ENCODE measurements at regions of chr14 and their contacts with region 1.

Region 1: DNA sequence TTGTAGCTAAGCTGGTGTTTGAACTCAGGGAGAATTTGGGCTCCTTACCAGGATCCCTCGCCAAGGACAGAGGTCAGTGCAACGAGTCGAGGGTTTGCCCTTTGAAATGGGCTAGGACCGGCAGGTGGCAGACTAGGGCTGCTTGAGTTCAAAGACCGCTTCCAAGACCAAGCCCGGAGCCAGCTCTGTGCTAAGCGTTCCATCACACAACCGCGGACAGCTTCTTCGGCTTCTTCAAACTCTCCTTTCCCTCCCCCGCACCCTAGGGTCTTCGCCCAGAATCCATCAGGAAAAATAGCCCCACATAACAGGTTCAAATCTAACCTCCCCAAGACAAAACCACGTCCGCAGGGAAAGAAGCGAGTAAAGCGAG is 705 bp upstream of the FLVCR2 start:
- DNase-seq: peak; percentile 79
- H3K4me3 Mint-ChIP-seq: peak overlapping the region; percentile 81
- H3K27ac Mint-ChIP-seq: peak overlapping the region; percentile 13
- H3K4me1 Mint-ChIP-seq: peaks cover 22% of the 10 kb centered on the region
- H3K27me3 Mint-ChIP-seq: no peaks in the 10 kb centered on the region

Region 2: DNA sequence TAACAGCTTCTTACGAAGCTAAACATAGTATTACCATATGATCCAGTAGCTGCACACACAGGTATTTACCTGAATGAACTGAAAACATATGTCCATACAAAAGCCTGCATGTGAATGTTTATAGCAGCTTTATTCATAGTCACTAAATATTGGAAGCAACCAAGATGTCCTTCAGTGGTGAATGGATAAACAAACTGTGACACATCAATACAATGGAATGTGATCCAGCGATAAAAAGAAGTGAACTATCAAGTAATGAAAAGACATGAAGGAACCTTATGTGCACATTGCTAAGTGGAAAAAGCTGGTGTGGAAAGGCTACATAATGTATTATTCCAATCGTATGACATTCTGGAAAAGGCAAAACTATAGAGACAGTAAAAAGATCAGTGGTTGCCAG is 188.0 kb before region 1 on chr14:
- CTCF ChIA-PET with region 1: no interaction called
- POLR2A ChIA-PET with region 1: no interaction called
- DNase-seq: no peak
- H3K4me3 Mint-ChIP-seq: no peak overlapping the region
- H3K27ac Mint-ChIP-seq: no peak overlapping the region
- H3K4me1 Mint-ChIP-seq: no peaks in the 10 kb centered on the region
- H3K27me3 Mint-ChIP-seq: peaks cover 37% of the 10 kb centered on the region

Region 3: DNA sequence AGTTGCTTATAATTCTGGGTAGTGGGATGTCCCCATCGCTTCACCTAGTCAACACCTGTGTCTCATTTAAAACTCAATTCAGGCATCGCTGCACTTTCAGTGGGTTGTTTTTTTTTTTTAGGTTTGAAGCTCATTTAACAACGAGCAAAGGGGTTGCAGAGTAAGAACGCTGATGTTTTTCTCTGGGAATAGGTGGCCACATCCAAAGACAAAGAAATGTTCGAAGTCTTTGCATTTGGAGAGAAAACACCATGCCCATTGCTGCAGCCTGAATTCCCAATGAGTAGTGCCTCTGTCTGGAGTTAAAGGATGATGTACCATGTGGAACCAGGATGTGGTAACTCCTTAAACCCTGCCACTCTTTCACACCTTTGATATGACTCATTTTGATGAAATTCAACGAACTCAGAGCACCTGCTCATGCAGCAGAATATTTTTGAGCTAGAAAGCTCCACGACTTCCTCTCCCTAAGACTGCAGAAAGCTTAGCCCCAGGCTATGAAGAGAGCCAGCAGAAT is 90.5 kb before region 1 on chr14:
- CTCF ChIA-PET with region 1: interaction called, 18 read pairs
- POLR2A ChIA-PET with region 1: no interaction called
- DNase-seq: peak; percentile 40
- H3K4me3 Mint-ChIP-seq: no peak overlapping the region
- H3K27ac Mint-ChIP-seq: peak overlapping the region; percentile 61
- H3K4me1 Mint-ChIP-seq: peaks cover 39% of the 10 kb centered on the region
- H3K27me3 Mint-ChIP-seq: no peaks in the 10 kb centered on the region

Region 4: DNA sequence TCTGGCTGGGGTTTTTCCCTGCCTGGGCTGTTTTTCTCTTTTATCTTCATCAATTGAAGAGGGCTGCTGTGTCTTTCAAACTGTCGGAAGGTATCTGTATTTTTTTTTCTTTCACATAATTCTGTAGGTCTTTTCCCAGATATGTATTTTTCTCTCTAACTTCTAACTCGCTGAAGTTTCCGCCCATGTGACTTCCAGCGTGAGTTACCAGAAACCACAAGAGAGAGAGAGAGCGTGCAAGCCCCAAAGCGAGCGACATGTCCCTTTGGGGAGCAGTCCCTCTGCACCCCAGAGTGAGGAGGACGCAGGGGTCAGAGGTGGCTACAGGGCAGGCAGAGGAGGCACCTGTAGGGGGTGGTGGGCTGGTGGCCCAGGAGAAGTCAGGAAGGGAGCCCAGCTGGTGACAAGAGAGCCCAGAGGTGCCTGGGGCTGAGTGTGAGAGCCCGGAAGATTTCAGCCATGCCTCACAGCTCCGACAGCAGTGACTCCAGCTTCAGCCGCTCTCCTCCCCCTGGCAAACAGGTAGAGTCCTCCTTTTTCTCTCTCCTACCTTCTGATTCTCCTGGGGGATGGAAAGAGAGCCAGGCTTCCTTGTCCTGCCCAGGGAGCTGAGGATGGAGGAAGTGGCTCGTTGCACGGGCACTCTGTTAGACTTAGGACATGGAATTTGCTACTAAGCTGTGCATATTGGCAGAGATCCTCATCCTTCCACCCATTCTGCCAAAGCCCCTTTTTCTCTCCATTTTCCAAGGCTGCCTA is 55.3 kb before region 1 on chr14 and contains the start of gene BATF:
- CTCF ChIA-PET with region 1: interaction called, 14 read pairs
- POLR2A ChIA-PET with region 1: interaction called, 6 read pairs
- DNase-seq: peak; percentile 85
- H3K4me3 Mint-ChIP-seq: peak within 1 kb of the TSS; percentile 99
- H3K27ac Mint-ChIP-seq: peak within 1 kb of the TSS; percentile 94
- H3K4me1 Mint-ChIP-seq: peaks cover 65% of the 10 kb centered on the region
- H3K27me3 Mint-ChIP-seq: no peaks in the 10 kb centered on the region
- total RNA-seq, gene BATF: 63.0 to 66.1 TPM

Region 5: DNA sequence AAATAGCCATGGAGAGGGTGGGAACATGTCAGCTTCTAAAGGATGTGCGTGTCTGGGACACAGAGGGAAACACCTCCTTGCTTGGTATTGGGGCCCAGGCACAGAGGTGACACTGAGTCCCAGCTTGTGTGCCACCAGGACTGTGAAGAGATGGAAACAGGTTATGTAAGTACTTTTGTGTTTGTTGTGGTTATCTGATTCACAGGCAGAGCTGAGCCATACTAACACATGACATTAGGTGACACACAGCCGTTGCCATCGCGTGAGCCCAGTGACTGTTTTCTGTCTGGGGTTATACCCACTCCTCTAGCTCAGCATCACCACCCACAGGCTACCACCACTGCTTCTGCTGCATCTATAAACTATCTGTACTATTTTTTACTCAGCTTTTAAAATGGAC is 11.4 kb before region 1 on chr14:
- CTCF ChIA-PET with region 1: interaction called, 27 read pairs
- POLR2A ChIA-PET with region 1: interaction called, 7 read pairs
- DNase-seq: peak; percentile 84
- H3K4me3 Mint-ChIP-seq: peak overlapping the region; percentile 21
- H3K27ac Mint-ChIP-seq: peak overlapping the region; percentile 74
- H3K4me1 Mint-ChIP-seq: peaks cover 74% of the 10 kb centered on the region
- H3K27me3 Mint-ChIP-seq: no peaks in the 10 kb centered on the region

Region 6: DNA sequence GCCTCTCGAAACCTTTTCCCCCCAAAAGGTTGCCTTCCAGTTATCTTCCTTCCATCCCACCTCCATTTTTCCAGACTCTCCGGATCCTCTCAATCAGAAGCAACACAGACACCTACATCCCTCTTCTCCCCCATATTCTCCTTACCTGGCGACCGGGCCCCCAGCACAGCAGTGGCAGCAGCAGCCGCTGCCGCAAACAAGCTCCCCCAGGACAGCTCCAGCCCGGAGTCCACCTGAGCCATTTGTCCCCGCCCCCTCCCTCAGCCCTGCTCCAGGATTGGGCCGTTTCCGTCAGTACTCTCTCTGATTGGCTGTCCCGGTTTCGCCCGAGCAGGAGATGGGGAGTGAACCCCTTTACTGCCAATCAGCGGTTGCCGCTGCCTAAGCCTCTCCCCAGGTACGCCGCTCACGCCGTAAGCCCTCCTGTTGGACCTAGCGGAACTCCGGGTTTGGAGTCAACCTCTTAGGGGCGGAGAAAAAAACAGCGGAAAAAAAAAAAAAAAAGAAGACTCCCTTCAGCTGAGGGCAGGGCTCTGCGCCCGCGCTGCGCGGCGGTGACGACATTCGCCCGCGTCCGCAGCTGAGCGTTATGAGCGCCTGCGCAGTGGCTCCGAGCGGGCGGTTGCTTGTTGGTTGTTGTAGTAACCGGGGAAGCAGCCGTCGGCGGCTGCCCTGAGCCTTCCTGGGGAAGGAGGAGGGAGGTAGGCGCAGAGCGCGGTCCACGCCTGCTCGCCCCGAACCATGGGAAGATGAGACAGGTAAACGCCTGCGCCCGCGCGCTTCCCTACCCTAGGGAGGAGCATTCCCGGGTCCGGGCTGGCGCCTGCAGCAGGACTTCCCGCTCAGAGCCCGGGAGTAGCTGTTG is 83.1 kb after region 1 on chr14 and contains the starts of genes ERG28 and TTLL5:
- CTCF ChIA-PET with region 1: interaction called, 185 read pairs
- POLR2A ChIA-PET with region 1: interaction called, 6 read pairs
- DNase-seq: peak; percentile 98
- H3K4me3 Mint-ChIP-seq: peak within 1 kb of the TSS; percentile 95
- H3K27ac Mint-ChIP-seq: peak within 1 kb of the TSS; percentile 90
- H3K4me1 Mint-ChIP-seq: peaks cover 36% of the 10 kb centered on the region
- H3K27me3 Mint-ChIP-seq: no peaks in the 10 kb centered on the region
- total RNA-seq, gene ERG28: 26.9 to 29.4 TPM
- total RNA-seq, gene TTLL5: 30.6 to 33.1 TPM

Region 7: GRCh38 chr14:75982266-75983018 is 404.7 kb after region 1 on chr14:
- CTCF ChIA-PET with region 1: interaction called, 12 read pairs
- POLR2A ChIA-PET with region 1: no interaction called
- DNase-seq: peak; percentile 79
- H3K4me3 Mint-ChIP-seq: peak overlapping the region; percentile 74
- H3K27ac Mint-ChIP-seq: peak overlapping the region; percentile 47
- H3K4me1 Mint-ChIP-seq: peaks cover 49% of the 10 kb centered on the region
- H3K27me3 Mint-ChIP-seq: peaks cover 16% of the 10 kb centered on the region